Natural killer cell (primary cell): ENCODE measurements at regions of chr1 and their contacts with region 1.

Region 1: DNA sequence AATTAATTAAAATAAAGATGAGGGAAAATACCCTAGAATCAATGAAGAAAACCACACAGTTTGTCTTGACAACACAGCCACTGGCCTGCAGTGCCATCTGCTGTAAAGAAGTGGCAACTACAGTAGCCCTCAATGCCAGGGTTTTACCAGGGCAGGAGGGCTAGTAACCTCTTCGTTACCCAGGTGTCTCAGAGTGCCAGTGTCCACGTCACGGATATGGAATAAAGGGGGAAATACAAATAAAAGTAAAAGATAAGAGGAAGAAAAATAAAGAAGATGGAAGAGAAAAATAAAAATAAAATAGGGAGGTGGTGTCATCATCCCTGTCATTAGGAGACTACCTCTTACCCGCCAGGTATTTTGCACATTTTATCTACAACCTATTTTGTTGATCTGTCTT is 14.2 kb upstream of the SLC44A3 start:
- DNase-seq: peak in 1 of 2 donors; percentile 68
- ATAC-seq: peak; percentile 72 to 85 (median 78)
- H3K4me3 ChIP-seq: no peak overlapping the region
- H3K4me3 Mint-ChIP-seq: no peak overlapping the region
- H3K27ac ChIP-seq: no peak overlapping the region
- H3K27ac Mint-ChIP-seq: no peak overlapping the region
- H3K4me1 ChIP-seq: peaks cover 8% of the 10 kb centered on the region
- H3K4me1 Mint-ChIP-seq: peaks cover 11 to 17% of the 10 kb centered on the region in 2 donors
- H3K27me3 ChIP-seq: no peaks in the 10 kb centered on the region
- H3K27me3 Mint-ChIP-seq: peaks cover 2 to 15% of the 10 kb centered on the region in 2 donors
- CTCF ChIP-seq: peak; percentile 99

Region 2: GRCh38 chr1:94039514-94039870 is 766.4 kb before region 1 on chr1:
- intact Hi-C with region 1: loop called (anchors 2 kb)
- DNase-seq: peak; percentile 51 to 73
- ATAC-seq: peak in 2 of 3 donors; percentile 58 to 68
- H3K4me3 ChIP-seq: no peak overlapping the region
- H3K4me3 Mint-ChIP-seq: no peak overlapping the region
- H3K27ac ChIP-seq: no peak overlapping the region
- H3K27ac Mint-ChIP-seq: no peak overlapping the region
- H3K4me1 ChIP-seq: peaks cover 10% of the 10 kb centered on the region
- H3K4me1 Mint-ChIP-seq: peaks cover 22% of the 10 kb centered on the region in 2 donors
- H3K27me3 ChIP-seq: peaks cover 3% of the 10 kb centered on the region
- H3K27me3 Mint-ChIP-seq: peaks cover 2 to 7% of the 10 kb centered on the region in 2 donors
- CTCF ChIP-seq: peak; percentile 94

Region 3: DNA sequence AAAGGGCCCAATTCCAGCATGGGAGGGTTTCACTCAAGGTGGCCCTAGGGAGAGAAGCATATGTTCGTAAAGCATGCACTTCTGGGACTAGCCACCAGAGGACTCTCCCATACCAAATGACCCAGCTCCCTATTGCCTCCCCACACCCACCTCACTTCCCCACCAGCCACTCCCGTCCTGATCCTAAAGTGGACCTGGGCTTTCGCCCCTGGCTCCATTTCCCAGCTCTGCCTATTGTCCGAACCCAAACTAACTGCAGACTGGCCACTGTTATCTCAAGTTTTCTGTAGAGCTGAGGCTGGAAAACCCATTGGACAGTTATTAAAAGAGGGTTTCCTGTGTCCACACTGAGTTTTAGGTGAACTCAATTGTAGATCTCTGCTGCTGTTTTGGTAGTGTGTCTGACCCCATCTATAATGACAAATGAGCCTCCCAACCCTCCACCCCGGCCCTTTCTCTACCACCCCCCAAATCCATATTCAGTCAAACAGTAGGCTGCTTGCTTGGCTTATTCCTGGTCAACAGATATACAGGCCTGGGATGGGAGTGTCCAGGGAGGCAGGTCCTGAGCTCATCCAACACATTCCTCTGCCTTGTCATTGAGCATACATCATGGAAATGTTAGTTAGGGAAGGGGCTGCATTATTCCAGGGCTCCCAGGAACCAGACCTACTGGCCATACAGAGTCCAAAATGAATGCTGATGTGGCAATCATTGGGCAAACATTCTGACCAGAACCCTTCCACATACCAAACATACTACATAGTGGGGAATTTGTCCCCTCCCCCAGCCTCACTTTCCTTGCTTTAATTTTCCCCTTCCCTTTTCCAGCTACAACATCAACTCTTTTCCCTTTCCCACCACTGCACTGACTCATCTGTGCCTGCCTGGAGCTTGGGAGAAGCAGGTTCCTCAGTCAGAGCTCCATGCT is 744.1 kb before region 1 on chr1:
- intact Hi-C with region 1: loop called (anchors 2 kb)
- DNase-seq: peak in 1 of 2 donors; percentile 55
- ATAC-seq: peak; percentile 54 to 85 (median 64)
- H3K4me3 ChIP-seq: no peak overlapping the region
- H3K4me3 Mint-ChIP-seq: no peak overlapping the region
- H3K27ac ChIP-seq: no peak overlapping the region
- H3K27ac Mint-ChIP-seq: no peak overlapping the region
- H3K4me1 ChIP-seq: no peaks in the 10 kb centered on the region
- H3K4me1 Mint-ChIP-seq: peaks cover 0 to 5% of the 10 kb centered on the region in 2 donors
- H3K27me3 ChIP-seq: no peaks in the 10 kb centered on the region
- H3K27me3 Mint-ChIP-seq: peaks cover 6 to 26% of the 10 kb centered on the region in 2 donors
- CTCF ChIP-seq: peak; percentile 64

Region 4: DNA sequence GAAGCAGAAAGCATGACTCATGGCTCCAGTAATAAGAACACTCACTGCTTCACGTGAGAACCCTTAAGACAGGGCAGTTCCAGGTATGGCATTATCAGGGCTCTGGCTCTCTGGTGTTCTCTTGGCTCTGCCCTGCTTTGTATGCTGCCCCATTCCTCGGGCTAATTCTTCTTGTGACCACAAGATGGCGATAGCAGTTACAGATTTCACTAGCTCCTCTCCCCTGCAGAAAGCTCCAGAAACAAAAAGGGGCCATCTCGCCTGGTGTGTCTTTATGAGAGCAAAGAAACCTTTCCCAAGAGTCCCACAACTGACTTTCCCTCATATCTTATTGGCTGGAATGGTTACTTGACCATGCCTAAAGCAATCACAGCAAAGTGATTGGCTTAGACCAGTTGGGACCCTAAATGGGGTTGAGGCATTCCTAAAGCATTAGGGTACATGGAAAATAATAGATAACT is 324.4 kb before region 1 on chr1:
- intact Hi-C with region 1: loop called (anchors 1 kb)
- DNase-seq: peak in 1 of 2 donors; percentile 74
- ATAC-seq: peak; percentile 78 to 83 (median 80)
- H3K4me3 ChIP-seq: no peak overlapping the region
- H3K4me3 Mint-ChIP-seq: no peak overlapping the region
- H3K27ac ChIP-seq: no peak overlapping the region
- H3K27ac Mint-ChIP-seq: no peak overlapping the region
- H3K4me1 ChIP-seq: no peaks in the 10 kb centered on the region
- H3K4me1 Mint-ChIP-seq: peaks cover 0 to 2% of the 10 kb centered on the region in 2 donors
- H3K27me3 ChIP-seq: no peaks in the 10 kb centered on the region
- H3K27me3 Mint-ChIP-seq: no peaks in the 10 kb centered on the region
- CTCF ChIP-seq: peak; percentile 81

Region 5: GRCh38 chr1:94514095-94514727 is 291.7 kb before region 1 on chr1:
- intact Hi-C with region 1: loop called (anchors 1 kb)
- DNase-seq: peak in 1 of 2 donors; percentile 18
- ATAC-seq: peak in 1 of 3 donors; percentile 52
- H3K4me3 ChIP-seq: no peak overlapping the region
- H3K4me3 Mint-ChIP-seq: no peak overlapping the region
- H3K27ac ChIP-seq: no peak overlapping the region
- H3K27ac Mint-ChIP-seq: no peak overlapping the region
- H3K4me1 ChIP-seq: no peaks in the 10 kb centered on the region
- H3K4me1 Mint-ChIP-seq: no peaks in the 10 kb centered on the region
- H3K27me3 ChIP-seq: no peaks in the 10 kb centered on the region
- H3K27me3 Mint-ChIP-seq: no peaks in the 10 kb centered on the region
- CTCF ChIP-seq: peak; percentile 31

Region 6: DNA sequence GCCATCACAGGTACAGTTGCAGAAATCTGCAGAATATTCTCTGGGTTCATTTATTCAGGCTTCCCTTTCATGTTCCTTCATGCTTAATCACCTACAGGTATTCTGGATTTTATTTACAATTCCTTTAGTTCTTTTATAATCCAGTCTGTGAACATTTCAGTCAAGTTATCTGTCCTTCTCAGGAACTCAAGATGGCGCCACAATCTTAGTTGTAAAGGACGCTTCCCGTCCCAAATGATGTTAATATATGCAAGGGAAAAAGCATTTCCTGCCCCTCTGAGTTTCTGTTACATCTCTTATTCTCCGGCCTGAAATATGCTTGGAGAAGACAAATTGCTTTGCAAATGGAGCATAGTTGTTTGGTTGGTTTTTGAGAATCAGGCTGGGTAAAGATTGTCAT is 283.6 kb before region 1 on chr1:
- intact Hi-C with region 1: loop called (anchors 2 kb)
- DNase-seq: no peak
- ATAC-seq: no peak
- H3K4me3 ChIP-seq: no peak overlapping the region
- H3K4me3 Mint-ChIP-seq: no peak overlapping the region
- H3K27ac ChIP-seq: no peak overlapping the region
- H3K27ac Mint-ChIP-seq: no peak overlapping the region
- H3K4me1 ChIP-seq: no peaks in the 10 kb centered on the region
- H3K4me1 Mint-ChIP-seq: no peaks in the 10 kb centered on the region
- H3K27me3 ChIP-seq: no peaks in the 10 kb centered on the region
- H3K27me3 Mint-ChIP-seq: peaks cover 0 to 11% of the 10 kb centered on the region in 2 donors
- CTCF ChIP-seq: peak; percentile 9